ENCODE measurements at regions of chr2 and their contacts with region 1.

Region 1: DNA sequence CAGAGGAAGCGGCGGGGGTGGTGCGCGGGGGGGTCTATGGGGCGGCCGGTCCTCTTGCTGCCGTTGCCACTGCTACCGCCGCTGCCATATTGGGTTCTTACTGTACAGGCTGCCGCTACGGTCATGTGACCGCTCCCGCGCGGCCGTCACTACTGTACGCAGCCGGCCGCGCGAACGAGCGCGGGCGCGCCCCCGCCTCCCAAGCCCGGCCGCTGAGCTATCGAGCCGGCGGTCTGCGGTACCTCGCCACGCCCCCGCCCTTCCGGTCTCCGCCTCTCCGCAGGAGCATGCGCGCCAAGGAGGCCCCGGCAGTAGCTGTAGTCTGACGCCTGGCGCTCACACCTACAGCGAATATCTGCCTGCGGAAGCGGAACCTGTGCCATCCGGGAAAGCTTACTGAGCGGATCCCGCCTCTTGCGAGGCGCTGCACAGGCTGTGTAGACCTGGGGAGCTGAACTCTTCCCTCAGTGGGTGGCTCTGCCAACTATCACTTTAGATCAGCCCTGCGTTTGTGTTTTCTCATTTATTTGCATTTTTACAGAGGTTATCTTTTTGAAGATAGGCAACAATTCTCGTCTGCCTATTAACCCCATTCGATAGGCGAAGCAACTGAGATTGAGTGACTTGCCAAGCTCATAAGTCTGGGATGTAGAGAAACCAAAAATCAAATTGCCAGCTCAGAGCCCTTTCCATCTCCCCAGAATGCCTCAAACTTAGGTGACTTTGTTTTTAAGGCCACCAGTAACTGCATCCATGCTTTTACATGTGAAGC is at the start of gene ASXL2:
- DNase-seq: peak; percentile 98 to 99
- ATAC-seq: peak; percentile 90 to 97 (median 90)
- H3K4me3 ChIP-seq: peak within 1 kb of the TSS; percentile 98
- H3K4me3 Mint-ChIP-seq: peak within 1 kb of the TSS; percentile 97
- H3K27ac ChIP-seq: peak within 1 kb of the TSS; percentile 93
- H3K27ac Mint-ChIP-seq: peak within 1 kb of the TSS; percentile 95 to 98
- H3K4me1 ChIP-seq: peaks cover 9% of the 10 kb centered on the region
- H3K4me1 Mint-ChIP-seq: peaks cover 33 to 41% of the 10 kb centered on the region in 2 donors
- H3K27me3 ChIP-seq: no peaks in the 10 kb centered on the region
- H3K27me3 Mint-ChIP-seq: peaks cover 0 to 6% of the 10 kb centered on the region in 2 donors
- CTCF ChIP-seq: no peak
- total RNA-seq, gene ASXL2: 27.7 to 32.6 (median 27.8) TPM

Region 2: DNA sequence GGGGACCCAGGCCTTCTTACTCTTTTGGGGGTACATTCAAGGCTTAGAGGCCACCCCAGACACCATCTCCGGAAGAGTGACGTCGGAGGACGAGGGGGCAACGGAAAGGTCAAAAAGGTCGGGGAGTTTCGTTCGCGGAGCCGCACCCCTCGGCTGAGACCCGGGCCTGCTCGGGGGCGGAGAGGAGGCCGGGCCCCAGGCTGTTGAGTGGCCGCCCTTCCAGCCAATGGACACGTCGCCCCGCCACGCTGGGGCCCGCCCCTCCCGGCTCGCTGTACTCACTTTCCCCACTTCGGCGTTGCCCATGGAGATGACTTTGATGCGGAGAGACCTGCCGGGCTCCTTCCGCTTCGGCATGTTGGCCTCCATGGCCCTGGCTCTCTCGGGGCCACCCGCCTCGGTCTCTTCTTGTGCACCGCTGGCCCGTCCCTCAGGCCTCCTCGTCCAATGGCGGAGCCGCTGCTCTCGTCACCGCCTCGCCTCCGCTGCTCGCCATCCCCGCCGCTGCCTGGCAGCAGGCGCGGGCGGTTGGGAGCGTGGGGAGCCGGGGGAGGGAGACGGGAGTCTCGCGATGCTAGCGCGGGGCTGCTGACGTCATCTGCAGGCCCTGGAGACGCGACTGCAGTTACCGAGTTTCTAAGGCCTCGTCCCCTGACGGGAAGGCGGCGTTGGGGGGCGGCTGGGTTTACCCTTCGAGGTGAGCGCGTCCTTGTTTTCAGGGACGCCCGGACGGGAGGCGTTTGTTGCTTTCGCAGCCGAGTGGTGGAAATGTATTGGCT is 906.8 kb before region 1 on chr2 and contains the start of gene DNAJC27:
- intact Hi-C with region 1: loop called (anchors 5 kb)
- DNase-seq: peak; percentile 98 to 99
- ATAC-seq: peak; percentile 86 to 96 (median 87)
- H3K4me3 ChIP-seq: peak within 1 kb of the TSS; percentile 96
- H3K4me3 Mint-ChIP-seq: peak within 1 kb of the TSS; percentile 98
- H3K27ac ChIP-seq: peak within 1 kb of the TSS; percentile 96
- H3K27ac Mint-ChIP-seq: peak within 1 kb of the TSS; percentile 100
- H3K4me1 ChIP-seq: peaks cover 13% of the 10 kb centered on the region
- H3K4me1 Mint-ChIP-seq: peaks cover 20 to 24% of the 10 kb centered on the region in 2 donors
- H3K27me3 ChIP-seq: no peaks in the 10 kb centered on the region
- H3K27me3 Mint-ChIP-seq: no peaks in the 10 kb centered on the region
- CTCF ChIP-seq: no peak
- total RNA-seq, gene DNAJC27: 14.1 to 19.7 (median 16.6) TPM

Region 3: DNA sequence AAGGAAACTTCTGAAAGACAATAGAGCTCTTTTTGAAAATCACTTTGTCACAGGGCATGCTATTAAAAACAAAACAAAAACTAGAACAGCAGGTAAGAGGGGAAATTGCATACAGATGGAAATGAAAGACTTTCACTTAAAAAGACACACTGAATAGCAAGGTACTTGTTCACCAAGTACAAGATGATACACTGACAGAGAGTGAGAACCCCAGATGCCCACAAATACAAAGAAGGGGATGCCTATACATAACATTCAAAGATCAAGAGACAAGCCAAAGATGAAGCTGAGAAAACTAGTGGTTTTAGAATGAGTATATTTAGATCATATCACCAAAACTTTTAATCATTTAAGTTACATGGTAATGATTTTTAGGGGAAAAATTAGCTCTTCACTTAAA is 60.9 kb before region 1 on chr2:
- intact Hi-C with region 1: loop called (anchors 10 kb)
- DNase-seq: peak in 1 of 2 donors; percentile 27
- ATAC-seq: peak; percentile 10 to 25 (median 20)
- H3K4me3 ChIP-seq: no peak overlapping the region
- H3K4me3 Mint-ChIP-seq: no peak overlapping the region
- H3K27ac ChIP-seq: no peak overlapping the region
- H3K27ac Mint-ChIP-seq: peak overlapping the region; percentile 6 to 84
- H3K4me1 ChIP-seq: peaks cover 19% of the 10 kb centered on the region
- H3K4me1 Mint-ChIP-seq: peaks cover 51 to 52% of the 10 kb centered on the region in 2 donors
- H3K27me3 ChIP-seq: no peaks in the 10 kb centered on the region
- H3K27me3 Mint-ChIP-seq: no peaks in the 10 kb centered on the region
- CTCF ChIP-seq: no peak

Region 4: DNA sequence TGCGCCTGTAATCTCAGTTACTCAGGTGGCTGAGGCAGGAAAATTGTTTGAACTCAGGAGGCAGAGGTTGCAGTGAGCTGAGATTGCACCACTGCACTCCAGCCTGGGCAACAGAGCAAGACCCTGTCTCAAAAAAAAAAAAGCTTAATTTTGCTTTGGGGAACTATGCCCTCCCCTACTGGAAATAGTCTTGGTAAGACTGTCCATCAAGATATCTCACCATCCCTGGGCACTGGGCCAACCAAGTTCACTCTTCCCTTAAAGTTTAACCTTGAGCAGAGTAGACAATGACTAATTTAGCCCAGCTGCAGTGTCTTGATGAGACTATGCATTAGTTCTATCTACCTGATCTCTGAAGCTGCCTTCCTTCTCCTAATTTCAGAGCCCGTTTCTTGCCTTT is 45.0 kb before region 1 on chr2:
- intact Hi-C with region 1: no loop called
- DNase-seq: no peak
- ATAC-seq: no peak
- H3K4me3 ChIP-seq: no peak overlapping the region
- H3K4me3 Mint-ChIP-seq: no peak overlapping the region
- H3K27ac ChIP-seq: no peak overlapping the region
- H3K27ac Mint-ChIP-seq: peak overlapping the region in 1 of 2 donors; percentile 93
- H3K4me1 ChIP-seq: peaks cover 13% of the 10 kb centered on the region
- H3K4me1 Mint-ChIP-seq: peaks cover 48 to 51% of the 10 kb centered on the region in 2 donors
- H3K27me3 ChIP-seq: no peaks in the 10 kb centered on the region
- H3K27me3 Mint-ChIP-seq: no peaks in the 10 kb centered on the region
- CTCF ChIP-seq: no peak

Region 5: GRCh38 chr2:26033818-26034636 is 155.5 kb after region 1 on chr2 and contains the start of gene RAB10:
- intact Hi-C with region 1: loop called (anchors 2 kb)
- DNase-seq: peak; percentile 97 to 99
- ATAC-seq: peak; percentile 82 to 97 (median 87)
- H3K4me3 ChIP-seq: peak within 1 kb of the TSS; percentile 71
- H3K4me3 Mint-ChIP-seq: peak within 1 kb of the TSS; percentile 95
- H3K27ac ChIP-seq: peak within 1 kb of the TSS; percentile 94
- H3K27ac Mint-ChIP-seq: peak within 1 kb of the TSS; percentile 88 to 98
- H3K4me1 ChIP-seq: peaks cover 33% of the 10 kb centered on the region
- H3K4me1 Mint-ChIP-seq: peaks cover 28 to 52% of the 10 kb centered on the region in 2 donors
- H3K27me3 ChIP-seq: no peaks in the 10 kb centered on the region
- H3K27me3 Mint-ChIP-seq: no peaks in the 10 kb centered on the region
- CTCF ChIP-seq: no peak
- total RNA-seq, gene RAB10: 35.8 to 44.2 (median 39.5) TPM

Region 6: GRCh38 chr2:26345545-26346453 is 467.3 kb after region 1 on chr2 and contains the start of gene SELENOI:
- intact Hi-C with region 1: loop called (anchors 5 kb)
- DNase-seq: peak; percentile 99 to 100
- ATAC-seq: peak; percentile 92 to 98 (median 95)
- H3K4me3 ChIP-seq: peak within 1 kb of the TSS; percentile 90
- H3K4me3 Mint-ChIP-seq: peak within 1 kb of the TSS; percentile 99
- H3K27ac ChIP-seq: peak within 1 kb of the TSS; percentile 91
- H3K27ac Mint-ChIP-seq: peak within 1 kb of the TSS; percentile 95 to 99
- H3K4me1 ChIP-seq: peaks cover 16% of the 10 kb centered on the region
- H3K4me1 Mint-ChIP-seq: peaks cover 35 to 38% of the 10 kb centered on the region in 2 donors
- H3K27me3 ChIP-seq: no peaks in the 10 kb centered on the region
- H3K27me3 Mint-ChIP-seq: no peaks in the 10 kb centered on the region
- CTCF ChIP-seq: no peak
- total RNA-seq, gene SELENOI: 28.1 to 47.6 (median 36.4) TPM

Measured in natural killer cell (primary cell).